Activated T-helper 1 cell treated with anti-CD3 and anti-CD28 coated beads, Interleukin-12 subunit alpha, Interleukin-12 subunit beta, Interleukin-2, Interleukin-4 antibody, amounts not matched to agents 30 ng/mL and 10 ng/mL and 1 ng/mL, durations not matched to agents 14 hours and 24 hours and 36 hours (primary cell): ENCODE measurements at regions of chrX and their contacts with region 1.

Region 1: GRCh38 chrX:69503782-69504625 is at the start of gene NALF2:
- DNase-seq: no peak
- H3K4me3 Mint-ChIP-seq: peak within 1 kb of the TSS; percentile 77
- H3K27ac Mint-ChIP-seq: no peak within 1 kb of the TSS
- H3K4me1 Mint-ChIP-seq: no peaks in the 10 kb centered on the region
- H3K27me3 Mint-ChIP-seq: peaks cover 13% of the 10 kb centered on the region
- total RNA-seq, gene NALF2: 1.2 TPM in 2 replicates

Region 2: DNA sequence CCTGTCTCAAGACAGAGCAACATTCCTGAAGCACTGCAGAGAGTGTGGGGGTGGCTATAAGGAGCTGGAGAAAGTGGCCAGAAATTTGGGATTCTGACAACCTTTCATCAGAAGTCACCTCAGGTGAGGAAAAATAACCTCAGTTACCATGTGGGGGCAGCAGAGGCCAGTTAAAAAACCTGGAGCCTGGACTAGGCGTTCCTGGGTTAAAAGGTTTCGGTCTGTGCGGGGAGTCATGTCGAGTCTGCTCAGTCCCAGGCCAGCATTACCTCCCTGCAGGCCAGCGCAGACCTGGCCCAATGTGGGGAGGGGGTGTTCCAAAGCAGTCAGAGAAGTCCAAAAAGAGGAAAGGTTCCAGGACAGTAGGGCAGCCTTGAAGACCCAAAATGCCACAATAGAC is 10.8 kb before region 1 on chrX:
- intact Hi-C with region 1: no loop called
- DNase-seq: no peak
- H3K4me3 Mint-ChIP-seq: no peak overlapping the region
- H3K27ac Mint-ChIP-seq: no peak overlapping the region
- H3K4me1 Mint-ChIP-seq: no peaks in the 10 kb centered on the region
- H3K27me3 Mint-ChIP-seq: no peaks in the 10 kb centered on the region

Region 3: DNA sequence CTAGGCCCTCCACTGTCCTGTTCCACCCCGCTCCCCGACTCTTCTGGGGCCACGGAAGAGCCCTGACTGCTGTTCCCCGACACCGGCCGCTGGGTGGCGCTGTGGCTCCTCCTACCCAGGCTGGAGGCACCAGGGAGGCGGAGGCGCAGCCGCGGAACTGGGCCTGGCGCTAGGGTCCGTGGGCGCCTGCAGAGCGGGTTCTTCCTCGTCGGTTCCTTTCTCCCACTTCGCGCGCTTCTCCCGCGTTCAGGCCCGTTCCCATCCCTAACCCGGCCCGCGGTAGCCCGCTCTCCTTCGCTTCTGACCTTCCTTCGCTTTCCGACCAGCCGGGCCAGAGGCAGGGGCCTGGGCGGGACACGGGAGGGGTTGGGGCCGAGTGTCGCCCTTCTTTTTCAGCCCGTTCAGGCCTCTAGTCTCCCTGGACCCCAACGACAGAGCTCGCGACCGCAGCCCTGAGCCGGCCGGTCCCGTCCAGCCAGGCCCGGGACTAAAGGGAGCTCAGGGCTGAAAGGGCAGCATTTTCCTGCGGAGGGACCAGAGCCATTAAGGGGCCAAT is 34.4 kb after region 1 on chrX:
- intact Hi-C with region 1: loop called (anchors 2 kb)
- DNase-seq: peak; percentile 62
- H3K4me3 Mint-ChIP-seq: peak overlapping the region; percentile 22
- H3K27ac Mint-ChIP-seq: no peak overlapping the region
- H3K4me1 Mint-ChIP-seq: peaks cover 17% of the 10 kb centered on the region
- H3K27me3 Mint-ChIP-seq: peaks cover 2% of the 10 kb centered on the region

Region 4: DNA sequence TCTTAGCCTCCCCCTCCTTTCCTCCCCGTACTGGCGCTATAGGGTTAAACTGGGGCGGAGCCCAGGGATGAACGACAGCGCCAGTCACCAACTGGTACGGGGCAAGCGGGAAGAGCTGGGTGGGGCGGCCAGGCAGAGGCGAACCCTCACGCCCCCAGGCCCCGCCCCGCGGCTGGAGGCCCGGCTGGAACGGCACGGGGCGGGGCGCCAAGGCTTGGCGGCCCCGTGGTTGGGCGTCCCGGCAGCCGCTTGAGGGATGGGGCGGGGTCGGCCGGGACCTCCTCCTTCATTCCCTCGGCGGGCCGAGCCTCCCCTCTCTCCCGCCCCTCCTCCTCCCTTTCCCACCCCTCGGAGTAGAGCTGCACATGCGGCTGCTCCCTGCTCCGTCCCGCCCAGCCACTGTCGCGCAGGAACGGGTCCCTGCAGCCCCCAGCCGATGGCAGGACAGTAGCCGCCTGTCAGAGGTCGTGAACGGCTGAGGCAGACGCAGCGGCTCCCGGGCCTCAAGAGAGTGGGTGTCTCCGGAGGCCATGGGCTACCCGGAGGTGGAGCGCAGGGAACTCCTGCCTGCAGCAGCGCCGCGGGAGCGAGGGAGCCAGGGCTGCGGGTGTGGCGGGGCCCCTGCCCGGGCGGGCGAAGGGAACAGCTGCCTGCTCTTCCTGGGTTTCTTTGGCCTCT is 111.9 kb after region 1 on chrX and contains the start of gene EDA:
- intact Hi-C with region 1: loop called (anchors 5 kb)
- DNase-seq: peak; percentile 68
- H3K4me3 Mint-ChIP-seq: peak within 1 kb of the TSS; percentile 77
- H3K27ac Mint-ChIP-seq: no peak within 1 kb of the TSS
- H3K4me1 Mint-ChIP-seq: peaks cover 17% of the 10 kb centered on the region
- H3K27me3 Mint-ChIP-seq: peaks cover 14% of the 10 kb centered on the region
- total RNA-seq, gene EDA: 1.6 and 2.4 TPM in 2 replicates